ENCODE measurements at regions of chr2 and their contacts with region 1.

Region 1: GRCh38 chr2:10342245-10342951 is 39.7 kb downstream of the HPCAL1 start:
- DNase-seq: no peak
- ATAC-seq: no peak
- H3K4me3 ChIP-seq: no peak overlapping the region
- H3K4me3 Mint-ChIP-seq: no peak overlapping the region
- H3K27ac ChIP-seq: no peak overlapping the region
- H3K27ac Mint-ChIP-seq: no peak overlapping the region
- H3K4me1 ChIP-seq: peaks cover 63% of the 10 kb centered on the region
- H3K4me1 Mint-ChIP-seq: peaks cover 80% of the 10 kb centered on the region
- H3K27me3 ChIP-seq: no peaks in the 10 kb centered on the region
- H3K27me3 Mint-ChIP-seq: no peaks in the 10 kb centered on the region
- CTCF ChIP-seq: no peak

Region 2: DNA sequence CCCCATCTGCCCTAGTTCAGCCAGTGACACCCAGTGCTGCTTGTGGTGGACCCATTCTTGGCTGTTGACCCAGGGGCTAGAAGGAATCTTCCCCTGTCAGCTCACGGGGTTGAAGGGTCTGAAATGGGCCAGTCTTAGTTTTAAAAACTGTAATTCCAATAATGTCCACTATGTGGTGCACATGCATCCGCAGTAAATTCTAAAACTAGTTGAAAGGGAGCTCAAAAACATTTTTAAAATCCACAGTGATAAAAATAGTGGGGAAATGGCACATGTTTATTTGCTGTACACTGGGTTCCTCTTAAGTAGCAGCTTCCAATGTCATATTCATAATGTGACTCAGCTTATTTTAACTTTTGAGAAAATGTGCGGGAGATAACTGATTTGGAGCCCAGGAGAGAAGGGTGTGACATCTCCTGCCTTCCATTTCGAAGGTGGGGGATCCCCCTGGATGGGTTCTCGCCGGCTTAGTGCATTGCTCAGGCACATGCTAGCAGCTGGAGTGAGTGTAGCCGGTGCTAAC is 358.1 kb before region 1 on chr2:
- CTCF ChIA-PET with region 1: no interaction called
- POLR2A ChIA-PET with region 1: no interaction called
- intact Hi-C with region 1: no loop called
- DNase-seq: peak in 6 of 9 experiments; percentile 7 to 77 (median 21)
- ATAC-seq: peak; percentile 87
- H3K4me3 ChIP-seq: no peak overlapping the region
- H3K4me3 Mint-ChIP-seq: no peak overlapping the region
- H3K27ac ChIP-seq: no peak overlapping the region
- H3K27ac Mint-ChIP-seq: no peak overlapping the region
- H3K4me1 ChIP-seq: peaks cover 9% of the 10 kb centered on the region
- H3K4me1 Mint-ChIP-seq: peaks cover 11% of the 10 kb centered on the region
- H3K27me3 ChIP-seq: no peaks in the 10 kb centered on the region
- H3K27me3 Mint-ChIP-seq: peaks cover 4% of the 10 kb centered on the region
- CTCF ChIP-seq: peak; percentile 84

Region 3: GRCh38 chr2:10319853-10320574 is 22.4 kb before region 1 on chr2:
- CTCF ChIA-PET with region 1: no interaction called
- POLR2A ChIA-PET with region 1: no interaction called
- intact Hi-C with region 1: no loop called
- DNase-seq: no peak
- ATAC-seq: no peak
- H3K4me3 ChIP-seq: no peak overlapping the region
- H3K4me3 Mint-ChIP-seq: no peak overlapping the region
- H3K27ac ChIP-seq: no peak overlapping the region
- H3K27ac Mint-ChIP-seq: peak overlapping the region; percentile 60
- H3K4me1 ChIP-seq: peaks cover 31% of the 10 kb centered on the region
- H3K4me1 Mint-ChIP-seq: peaks cover 80% of the 10 kb centered on the region
- H3K27me3 ChIP-seq: no peaks in the 10 kb centered on the region
- H3K27me3 Mint-ChIP-seq: no peaks in the 10 kb centered on the region
- CTCF ChIP-seq: no peak

Region 4: GRCh38 chr2:10369269-10370255 is 27.2 kb after region 1 on chr2:
- CTCF ChIA-PET with region 1: no interaction called
- POLR2A ChIA-PET with region 1: no interaction called
- intact Hi-C with region 1: loop called in 1 of 2 experiments (anchors 2 kb)
- DNase-seq: no peak
- ATAC-seq: no peak
- H3K4me3 ChIP-seq: no peak overlapping the region
- H3K4me3 Mint-ChIP-seq: no peak overlapping the region
- H3K27ac ChIP-seq: no peak overlapping the region
- H3K27ac Mint-ChIP-seq: peak overlapping the region; percentile 69
- H3K4me1 ChIP-seq: peaks cover 18% of the 10 kb centered on the region
- H3K4me1 Mint-ChIP-seq: peaks cover 65% of the 10 kb centered on the region
- H3K27me3 ChIP-seq: no peaks in the 10 kb centered on the region
- H3K27me3 Mint-ChIP-seq: no peaks in the 10 kb centered on the region
- CTCF ChIP-seq: no peak

Region 5: GRCh38 chr2:10415057-10415456 is 72.7 kb after region 1 on chr2:
- CTCF ChIA-PET with region 1: no interaction called
- POLR2A ChIA-PET with region 1: no interaction called
- intact Hi-C with region 1: no loop called
- DNase-seq: no peak
- ATAC-seq: no peak
- H3K4me3 ChIP-seq: no peak overlapping the region
- H3K4me3 Mint-ChIP-seq: no peak overlapping the region
- H3K27ac ChIP-seq: no peak overlapping the region
- H3K27ac Mint-ChIP-seq: no peak overlapping the region
- H3K4me1 ChIP-seq: no peaks in the 10 kb centered on the region
- H3K4me1 Mint-ChIP-seq: peaks cover 10% of the 10 kb centered on the region
- H3K27me3 ChIP-seq: no peaks in the 10 kb centered on the region
- H3K27me3 Mint-ChIP-seq: no peaks in the 10 kb centered on the region
- CTCF ChIP-seq: no peak